Activated B cell treated with CpG ODN at 0.5 μM for 24 hours (primary cell): ENCODE measurements at regions of chr2 and their contacts with region 1.

Region 1: GRCh38 chr2:233353769-233354499 is at the start of gene DGKD:
- DNase-seq: peak; percentile 74
- ATAC-seq: peak; percentile 78
- H3K4me3 Mint-ChIP-seq: peak within 1 kb of the TSS; percentile 93
- H3K27ac Mint-ChIP-seq: peak within 1 kb of the TSS; percentile 100
- H3K4me1 Mint-ChIP-seq: peaks cover 88% of the 10 kb centered on the region
- H3K27me3 Mint-ChIP-seq: no peaks in the 10 kb centered on the region
- CTCF ChIP-seq: no peak
- total RNA-seq, gene DGKD: 140 and 188 TPM in 2 replicates

Region 2: DNA sequence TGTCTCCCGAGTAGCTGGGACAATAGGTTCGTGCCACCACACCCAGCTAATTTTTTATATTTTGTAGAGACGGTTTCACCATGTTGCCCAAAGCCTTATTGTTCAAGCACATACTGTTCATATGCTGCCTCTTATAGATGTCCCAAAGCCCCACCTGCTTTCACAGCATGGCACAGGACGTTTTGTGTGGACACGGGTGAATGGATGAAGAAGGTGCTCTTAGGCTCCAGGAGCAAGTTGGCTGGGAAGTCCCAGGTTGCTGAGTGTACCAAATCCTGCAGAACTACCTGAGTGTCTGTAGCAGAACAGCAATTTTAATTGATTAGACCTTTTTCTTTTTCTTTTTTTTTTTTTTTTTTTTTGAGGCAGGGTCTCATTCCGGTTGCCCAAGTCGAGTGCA is 56.9 kb before region 1 on chr2:
- CTCF ChIA-PET with region 1: interaction called, 4 read pairs
- POLR2A ChIA-PET with region 1: no interaction called
- intact Hi-C with region 1: loop called (anchors 5 kb)
- DNase-seq: no peak
- ATAC-seq: no peak
- H3K4me3 Mint-ChIP-seq: no peak overlapping the region
- H3K27ac Mint-ChIP-seq: no peak overlapping the region
- H3K4me1 Mint-ChIP-seq: no peaks in the 10 kb centered on the region
- H3K27me3 Mint-ChIP-seq: no peaks in the 10 kb centered on the region
- CTCF ChIP-seq: no peak

Region 3: GRCh38 chr2:233331536-233331935 is 22.4 kb before region 1 on chr2:
- CTCF ChIA-PET with region 1: interaction called, 10 read pairs
- POLR2A ChIA-PET with region 1: interaction called, 93 read pairs
- intact Hi-C with region 1: loop called (anchors 1 kb)
- DNase-seq: peak; percentile 68
- ATAC-seq: peak; percentile 91
- H3K4me3 Mint-ChIP-seq: peak overlapping the region; percentile 42
- H3K27ac Mint-ChIP-seq: peak overlapping the region; percentile 97
- H3K4me1 Mint-ChIP-seq: peaks cover 82% of the 10 kb centered on the region
- H3K27me3 Mint-ChIP-seq: no peaks in the 10 kb centered on the region
- CTCF ChIP-seq: no peak

Region 4: GRCh38 chr2:233369897-233370685 is 16.2 kb after region 1 on chr2:
- CTCF ChIA-PET with region 1: interaction called, 4 read pairs
- POLR2A ChIA-PET with region 1: interaction called, 6 read pairs
- intact Hi-C with region 1: loop called (anchors 1 kb)
- DNase-seq: no peak
- ATAC-seq: peak; percentile 54
- H3K4me3 Mint-ChIP-seq: peak overlapping the region; percentile 44
- H3K27ac Mint-ChIP-seq: peak overlapping the region; percentile 72
- H3K4me1 Mint-ChIP-seq: peaks cover 80% of the 10 kb centered on the region
- H3K27me3 Mint-ChIP-seq: no peaks in the 10 kb centered on the region
- CTCF ChIP-seq: no peak

Region 5: GRCh38 chr2:233387667-233388528 is 34.0 kb after region 1 on chr2:
- CTCF ChIA-PET with region 1: interaction called, 12 read pairs
- POLR2A ChIA-PET with region 1: interaction called, 60 read pairs
- intact Hi-C with region 1: no loop called
- DNase-seq: no peak
- ATAC-seq: no peak
- H3K4me3 Mint-ChIP-seq: no peak overlapping the region
- H3K27ac Mint-ChIP-seq: peak overlapping the region; percentile 95
- H3K4me1 Mint-ChIP-seq: peaks cover 63% of the 10 kb centered on the region
- H3K27me3 Mint-ChIP-seq: no peaks in the 10 kb centered on the region
- CTCF ChIP-seq: no peak

Region 6: GRCh38 chr2:233443468-233444183 is 89.7 kb after region 1 on chr2:
- CTCF ChIA-PET with region 1: interaction called, 21 read pairs
- POLR2A ChIA-PET with region 1: interaction called, 3 read pairs
- intact Hi-C with region 1: loop called (anchors 1 kb)
- DNase-seq: peak; percentile 58
- ATAC-seq: peak; percentile 92
- H3K4me3 Mint-ChIP-seq: no peak overlapping the region
- H3K27ac Mint-ChIP-seq: peak overlapping the region; percentile 37
- H3K4me1 Mint-ChIP-seq: peaks cover 14% of the 10 kb centered on the region
- H3K27me3 Mint-ChIP-seq: no peaks in the 10 kb centered on the region
- CTCF ChIP-seq: peak; percentile 26

Region 7: GRCh38 chr2:233501198-233502076 is 147.5 kb after region 1 on chr2:
- CTCF ChIA-PET with region 1: no interaction called
- POLR2A ChIA-PET with region 1: no interaction called
- intact Hi-C with region 1: no loop called
- DNase-seq: no peak
- ATAC-seq: no peak
- H3K4me3 Mint-ChIP-seq: no peak overlapping the region
- H3K27ac Mint-ChIP-seq: no peak overlapping the region
- H3K4me1 Mint-ChIP-seq: peaks cover 17% of the 10 kb centered on the region
- H3K27me3 Mint-ChIP-seq: no peaks in the 10 kb centered on the region
- CTCF ChIP-seq: no peak